K562 (cell line): ENCODE measurements at regions of chr10 and their contacts with region 1.

Region 1: GRCh38 chr10:5165738-5166137 is 19.2 kb downstream of the AKR1C8 start:
- DNase-seq: peak; percentile 18 to 38 (median 22)
- ATAC-seq: no peak
- H3K4me3 ChIP-seq: no peak overlapping the region
- H3K27ac ChIP-seq: no peak overlapping the region
- H3K4me1 ChIP-seq: no peaks in the 10 kb centered on the region
- H3K27me3 ChIP-seq: no peaks in the 10 kb centered on the region
- CTCF ChIP-seq: no peak
- EP300 ChIP-seq: no peak
- POLR2A ChIP-seq: no peak
- RAD21 ChIP-seq: peak in 1 of 2 experiments; percentile 30; a peak in 2 of 4 replicates

Region 2: GRCh38 chr10:5147981-5148677 is 17.6 kb before region 1 on chr10:
- CTCF ChIA-PET with region 1: no interaction called
- POLR2A ChIA-PET with region 1: no interaction called
- in situ Hi-C with region 1: no loop called
- intact Hi-C with region 1: loop called (anchors 2 kb)
- DNase-seq: no peak
- ATAC-seq: no peak
- H3K4me3 ChIP-seq: no peak overlapping the region
- H3K27ac ChIP-seq: no peak overlapping the region
- H3K4me1 ChIP-seq: no peaks in the 10 kb centered on the region; a peak in 1 of 5 replicates
- H3K27me3 ChIP-seq: no peaks in the 10 kb centered on the region
- CTCF ChIP-seq: no peak
- EP300 ChIP-seq: no peak
- POLR2A ChIP-seq: no peak
- RAD21 ChIP-seq: no peak

Region 3: GRCh38 chr10:5196702-5197113 is 31.0 kb after region 1 on chr10 and contains the start of gene AKR1C4:
- CTCF ChIA-PET with region 1: no interaction called
- POLR2A ChIA-PET with region 1: no interaction called
- in situ Hi-C with region 1: no loop called
- intact Hi-C with region 1: no loop called
- DNase-seq: no peak
- ATAC-seq: no peak
- H3K4me3 ChIP-seq: no peak within 1 kb of the TSS
- H3K27ac ChIP-seq: no peak within 1 kb of the TSS
- H3K4me1 ChIP-seq: no peaks in the 10 kb centered on the region; a peak in 1 of 5 replicates
- H3K27me3 ChIP-seq: no peaks in the 10 kb centered on the region
- CTCF ChIP-seq: no peak
- EP300 ChIP-seq: no peak
- POLR2A ChIP-seq: no peak
- RAD21 ChIP-seq: no peak
- polyA plus RNA-seq, gene AKR1C4: not detected